Caco-2 (cell line): ENCODE measurements at regions of chr7 and their contacts with region 1.

Region 1: DNA sequence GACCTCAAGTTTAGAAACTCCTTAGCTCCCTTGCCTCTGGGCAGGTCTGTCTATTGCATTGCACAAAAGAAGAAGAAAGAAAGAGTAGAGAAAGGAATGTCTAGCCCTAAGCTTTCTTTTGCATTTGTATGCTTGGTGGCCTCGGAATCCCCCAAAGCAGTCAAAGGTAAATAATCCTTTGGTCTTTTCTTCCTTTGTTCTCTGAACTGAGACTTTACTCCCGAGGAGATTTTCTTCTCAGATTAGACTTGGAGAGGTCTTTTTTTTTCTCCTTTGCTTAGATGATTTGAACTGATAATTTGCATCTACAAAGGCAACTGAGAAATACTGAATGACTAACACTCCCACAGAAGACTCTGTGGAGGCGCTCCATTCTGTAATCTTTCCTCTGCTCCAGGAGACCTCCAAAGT is 93.2 kb downstream of the AKR1D1 start:
- DNase-seq: peak; percentile 69 to 70
- H3K4me3 ChIP-seq: no peak overlapping the region
- H3K4me3 Mint-ChIP-seq: peak overlapping the region; percentile 16
- H3K27ac Mint-ChIP-seq: peak overlapping the region; percentile 85
- H3K4me1 ChIP-seq: peaks cover 48% of the 10 kb centered on the region
- H3K4me1 Mint-ChIP-seq: peaks cover 32% of the 10 kb centered on the region
- H3K27me3 ChIP-seq: no peaks in the 10 kb centered on the region
- H3K27me3 Mint-ChIP-seq: no peaks in the 10 kb centered on the region
- CTCF ChIP-seq: no peak

Region 2: GRCh38 chr7:138030679-138031351 is 138.6 kb before region 1 on chr7:
- CTCF ChIA-PET with region 1: no interaction called
- POLR2A ChIA-PET with region 1: no interaction called
- intact Hi-C with region 1: loop called (anchors 1 kb)
- DNase-seq: no peak
- H3K4me3 ChIP-seq: no peak overlapping the region
- H3K4me3 Mint-ChIP-seq: no peak overlapping the region
- H3K27ac Mint-ChIP-seq: peak overlapping the region; percentile 72
- H3K4me1 ChIP-seq: peaks cover 32% of the 10 kb centered on the region
- H3K4me1 Mint-ChIP-seq: peaks cover 35% of the 10 kb centered on the region
- H3K27me3 ChIP-seq: no peaks in the 10 kb centered on the region
- H3K27me3 Mint-ChIP-seq: no peaks in the 10 kb centered on the region
- CTCF ChIP-seq: no peak

Region 3: DNA sequence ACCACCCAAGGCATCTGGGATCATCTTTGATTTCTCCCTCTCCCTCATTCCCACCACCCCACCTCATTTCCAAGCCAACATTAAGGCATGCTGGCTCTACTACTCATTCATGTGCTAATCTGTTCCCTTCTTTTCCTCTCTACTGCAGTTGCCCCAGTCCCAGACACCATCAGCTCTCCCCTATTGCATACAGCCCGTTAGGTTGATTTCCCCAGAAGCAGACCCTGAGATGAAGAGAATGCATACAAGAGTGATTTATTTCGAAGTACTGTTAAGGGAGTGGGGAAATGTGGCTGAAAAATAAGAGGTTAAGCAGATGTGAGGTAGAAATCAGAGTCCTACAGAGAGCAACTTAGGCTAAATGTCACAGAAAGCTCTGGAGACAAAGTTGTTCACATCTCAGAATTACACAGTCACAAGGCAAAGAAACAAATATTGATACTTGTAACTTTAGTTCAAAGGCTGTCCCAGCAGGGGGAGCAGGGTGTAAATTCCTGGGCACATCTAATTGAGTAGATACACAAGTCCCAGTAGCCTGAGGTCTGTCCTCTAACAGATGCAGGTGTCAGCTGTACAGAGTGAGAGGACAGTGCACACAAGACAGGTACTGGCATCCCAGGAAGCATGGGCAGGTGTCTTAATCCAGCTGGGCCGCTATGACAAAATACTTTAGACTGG is 72.2 kb before region 1 on chr7:
- CTCF ChIA-PET with region 1: no interaction called
- POLR2A ChIA-PET with region 1: no interaction called
- intact Hi-C with region 1: loop called (anchors 5 kb)
- DNase-seq: peak; percentile 71 to 77
- H3K4me3 ChIP-seq: no peak overlapping the region
- H3K4me3 Mint-ChIP-seq: no peak overlapping the region
- H3K27ac Mint-ChIP-seq: peak overlapping the region; percentile 74
- H3K4me1 ChIP-seq: peaks cover 6% of the 10 kb centered on the region
- H3K4me1 Mint-ChIP-seq: peaks cover 12% of the 10 kb centered on the region
- H3K27me3 ChIP-seq: no peaks in the 10 kb centered on the region
- H3K27me3 Mint-ChIP-seq: no peaks in the 10 kb centered on the region
- CTCF ChIP-seq: peak; percentile 43

Region 4: DNA sequence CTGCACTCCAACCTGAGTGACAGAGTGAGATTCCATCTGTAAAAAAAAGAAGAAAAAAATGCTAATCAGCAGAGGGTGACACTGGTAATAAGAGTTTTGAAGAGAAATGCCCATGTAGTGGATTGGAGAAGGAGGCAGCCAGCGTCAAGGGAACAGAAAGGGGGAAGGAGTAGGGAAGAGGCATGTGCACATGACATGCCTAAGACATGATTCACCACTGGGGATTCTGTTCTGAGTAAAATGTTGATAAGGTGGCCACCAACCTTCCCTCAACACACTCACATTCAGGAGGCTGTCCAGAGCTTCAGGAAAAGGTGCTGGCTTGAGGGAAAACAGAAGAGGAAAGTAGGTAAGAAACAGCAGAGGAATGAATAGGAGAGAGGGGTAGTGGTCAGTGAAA is 53.3 kb before region 1 on chr7:
- CTCF ChIA-PET with region 1: no interaction called
- POLR2A ChIA-PET with region 1: no interaction called
- intact Hi-C with region 1: no loop called
- DNase-seq: peak; percentile 30 to 54
- H3K4me3 ChIP-seq: no peak overlapping the region
- H3K4me3 Mint-ChIP-seq: peak overlapping the region; percentile 0
- H3K27ac Mint-ChIP-seq: peak overlapping the region; percentile 22
- H3K4me1 ChIP-seq: peaks cover 17% of the 10 kb centered on the region
- H3K4me1 Mint-ChIP-seq: peaks cover 10% of the 10 kb centered on the region
- H3K27me3 ChIP-seq: no peaks in the 10 kb centered on the region
- H3K27me3 Mint-ChIP-seq: no peaks in the 10 kb centered on the region
- CTCF ChIP-seq: no peak

Region 5: DNA sequence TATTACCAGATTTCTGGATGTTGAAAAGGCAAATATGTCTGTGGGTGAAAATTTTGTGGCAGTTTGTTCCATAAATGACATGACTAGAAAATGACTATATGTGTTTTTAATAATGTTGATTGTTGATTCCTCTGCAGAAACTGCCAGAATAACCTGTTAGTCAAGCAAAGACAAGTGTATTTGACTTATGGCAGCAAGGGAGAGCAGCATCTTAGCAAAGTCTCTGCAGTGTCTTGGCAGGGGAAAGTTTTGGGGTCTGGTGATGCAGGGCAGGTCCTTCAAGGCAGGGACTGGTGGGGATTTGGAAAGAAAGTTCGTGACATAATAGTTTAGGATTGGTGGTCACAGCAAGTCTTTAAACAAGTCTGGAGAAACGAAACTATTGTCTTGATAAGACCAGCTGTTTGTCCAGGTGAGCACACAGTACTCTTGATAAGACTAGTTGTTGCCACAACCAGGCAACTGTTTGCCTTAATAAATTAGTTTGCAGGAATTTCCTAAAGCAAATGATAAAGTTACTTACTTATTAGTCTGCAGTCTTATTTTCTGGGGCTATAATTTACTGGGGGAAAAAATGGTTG is 42.8 kb after region 1 on chr7:
- CTCF ChIA-PET with region 1: no interaction called
- POLR2A ChIA-PET with region 1: no interaction called
- intact Hi-C with region 1: loop called (anchors 1 kb)
- DNase-seq: peak; percentile 64 to 66
- H3K4me3 ChIP-seq: no peak overlapping the region
- H3K4me3 Mint-ChIP-seq: peak overlapping the region; percentile 16
- H3K27ac Mint-ChIP-seq: peak overlapping the region; percentile 69
- H3K4me1 ChIP-seq: peaks cover 18% of the 10 kb centered on the region
- H3K4me1 Mint-ChIP-seq: peaks cover 10% of the 10 kb centered on the region
- H3K27me3 ChIP-seq: no peaks in the 10 kb centered on the region
- H3K27me3 Mint-ChIP-seq: no peaks in the 10 kb centered on the region
- CTCF ChIP-seq: no peak

Region 6: DNA sequence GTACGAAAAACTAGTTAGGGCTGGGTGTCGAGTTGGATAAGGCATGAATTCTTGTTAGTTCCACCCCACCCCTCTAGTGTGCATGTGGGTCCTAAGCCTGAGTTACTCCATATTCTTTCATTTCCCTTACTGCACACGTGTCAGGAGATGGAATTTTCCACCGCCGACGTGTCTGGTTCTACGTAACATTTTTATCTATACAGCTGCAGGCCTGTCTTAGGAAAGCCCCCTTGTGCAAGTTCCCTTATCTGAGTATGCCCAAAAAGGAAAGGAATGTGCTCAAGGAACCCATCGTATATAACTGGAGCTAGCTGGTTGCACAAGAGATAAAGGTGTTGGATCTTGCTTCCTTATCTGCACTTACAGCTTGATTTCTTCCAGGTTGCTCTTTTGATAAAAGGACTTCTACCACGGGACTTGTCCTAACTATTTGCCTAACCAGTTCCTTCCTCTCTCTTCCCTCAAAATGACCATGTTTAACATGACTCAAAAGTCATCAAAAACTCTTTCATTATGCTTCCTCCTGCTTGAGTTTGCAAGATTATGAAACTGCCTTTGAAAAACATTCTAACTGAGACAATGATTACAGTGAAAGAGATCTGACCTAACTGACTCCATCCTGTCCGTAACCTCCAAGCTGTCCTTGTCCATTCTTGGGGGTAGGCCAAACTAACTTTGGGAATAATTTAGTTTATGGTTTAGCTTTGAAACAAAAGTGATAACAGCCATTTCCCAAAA is 88.2 kb after region 1 on chr7:
- CTCF ChIA-PET with region 1: no interaction called
- POLR2A ChIA-PET with region 1: no interaction called
- intact Hi-C with region 1: loop called (anchors 1 kb)
- DNase-seq: peak; percentile 79 to 90
- H3K4me3 ChIP-seq: no peak overlapping the region
- H3K4me3 Mint-ChIP-seq: peak overlapping the region; percentile 4
- H3K27ac Mint-ChIP-seq: peak overlapping the region; percentile 94
- H3K4me1 ChIP-seq: peaks cover 28% of the 10 kb centered on the region
- H3K4me1 Mint-ChIP-seq: peaks cover 10% of the 10 kb centered on the region
- H3K27me3 ChIP-seq: no peaks in the 10 kb centered on the region
- H3K27me3 Mint-ChIP-seq: no peaks in the 10 kb centered on the region
- CTCF ChIP-seq: no peak

Region 7: GRCh38 chr7:138388673-138389491 is 219.4 kb after region 1 on chr7:
- CTCF ChIA-PET with region 1: no interaction called
- POLR2A ChIA-PET with region 1: no interaction called
- intact Hi-C with region 1: loop called (anchors 2 kb)
- DNase-seq: peak; percentile 51 to 60
- H3K4me3 ChIP-seq: no peak overlapping the region
- H3K4me3 Mint-ChIP-seq: no peak overlapping the region
- H3K27ac Mint-ChIP-seq: peak overlapping the region; percentile 72
- H3K4me1 ChIP-seq: peaks cover 9% of the 10 kb centered on the region; the same call in 1 of the 2 replicates
- H3K4me1 Mint-ChIP-seq: no peaks in the 10 kb centered on the region
- H3K27me3 ChIP-seq: no peaks in the 10 kb centered on the region
- H3K27me3 Mint-ChIP-seq: no peaks in the 10 kb centered on the region
- CTCF ChIP-seq: no peak